ENCODE measurements at regions of chr4 and their contacts with region 1.

Region 1: GRCh38 chr4:2262143-2262943 is 434 bp upstream of the MXD4 start:
- DNase-seq: peak; percentile 92 to 99 (median 97)
- ATAC-seq: peak; percentile 89
- H3K4me3 ChIP-seq: peak overlapping the region; percentile 64
- H3K4me3 Mint-ChIP-seq: peak overlapping the region; percentile 96
- H3K27ac ChIP-seq: peak overlapping the region; percentile 84 to 93
- H3K27ac Mint-ChIP-seq: peak overlapping the region; percentile 95
- H3K4me1 ChIP-seq: peaks cover 51% of the 10 kb centered on the region
- H3K4me1 Mint-ChIP-seq: no peaks in the 10 kb centered on the region
- H3K27me3 ChIP-seq: no peaks in the 10 kb centered on the region
- H3K27me3 Mint-ChIP-seq: no peaks in the 10 kb centered on the region
- CTCF ChIP-seq: no peak

Region 2: DNA sequence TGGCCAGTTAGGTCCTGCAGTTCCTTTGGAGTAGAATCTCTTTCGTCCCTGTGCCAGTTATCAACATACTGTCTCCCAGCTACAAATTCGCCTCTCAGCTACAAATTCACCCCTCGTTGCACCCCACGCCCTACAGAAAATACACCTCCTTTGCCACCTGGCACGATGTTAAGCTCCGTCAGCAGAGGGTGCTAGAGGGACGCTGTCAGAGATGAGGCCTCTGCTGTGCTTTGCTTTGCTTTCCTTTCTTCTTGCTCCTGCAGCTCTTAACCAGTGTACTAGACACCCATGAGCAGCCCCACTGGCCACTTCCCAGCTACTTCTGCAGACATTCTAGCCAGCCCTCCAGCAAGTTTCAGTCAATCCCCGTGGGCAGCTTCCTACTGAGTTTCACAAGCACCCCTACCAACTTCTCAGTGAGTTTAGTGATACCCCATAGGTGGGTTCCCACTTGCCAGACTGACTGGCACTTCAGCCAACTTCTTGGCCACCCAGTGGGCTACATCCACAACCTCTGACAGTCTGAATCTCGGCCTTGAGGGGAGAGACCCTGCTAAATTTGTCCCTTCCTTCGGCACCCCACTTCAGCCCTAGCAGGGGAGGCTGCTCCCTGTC is 42.2 kb before region 1 on chr4:
- CTCF ChIA-PET with region 1: no interaction called
- POLR2A ChIA-PET with region 1: interaction called, 5 read pairs
- intact Hi-C with region 1: loop called in 1 of 2 experiments (anchors 1 kb)
- DNase-seq: peak; percentile 71 to 88 (median 78)
- ATAC-seq: peak; percentile 98
- H3K4me3 ChIP-seq: no peak overlapping the region
- H3K4me3 Mint-ChIP-seq: no peak overlapping the region
- H3K27ac ChIP-seq: no peak overlapping the region
- H3K27ac Mint-ChIP-seq: no peak overlapping the region
- H3K4me1 ChIP-seq: peaks cover 6% of the 10 kb centered on the region
- H3K4me1 Mint-ChIP-seq: peaks cover 7% of the 10 kb centered on the region
- H3K27me3 ChIP-seq: no peaks in the 10 kb centered on the region
- H3K27me3 Mint-ChIP-seq: no peaks in the 10 kb centered on the region
- CTCF ChIP-seq: peak; percentile 88

Region 3: DNA sequence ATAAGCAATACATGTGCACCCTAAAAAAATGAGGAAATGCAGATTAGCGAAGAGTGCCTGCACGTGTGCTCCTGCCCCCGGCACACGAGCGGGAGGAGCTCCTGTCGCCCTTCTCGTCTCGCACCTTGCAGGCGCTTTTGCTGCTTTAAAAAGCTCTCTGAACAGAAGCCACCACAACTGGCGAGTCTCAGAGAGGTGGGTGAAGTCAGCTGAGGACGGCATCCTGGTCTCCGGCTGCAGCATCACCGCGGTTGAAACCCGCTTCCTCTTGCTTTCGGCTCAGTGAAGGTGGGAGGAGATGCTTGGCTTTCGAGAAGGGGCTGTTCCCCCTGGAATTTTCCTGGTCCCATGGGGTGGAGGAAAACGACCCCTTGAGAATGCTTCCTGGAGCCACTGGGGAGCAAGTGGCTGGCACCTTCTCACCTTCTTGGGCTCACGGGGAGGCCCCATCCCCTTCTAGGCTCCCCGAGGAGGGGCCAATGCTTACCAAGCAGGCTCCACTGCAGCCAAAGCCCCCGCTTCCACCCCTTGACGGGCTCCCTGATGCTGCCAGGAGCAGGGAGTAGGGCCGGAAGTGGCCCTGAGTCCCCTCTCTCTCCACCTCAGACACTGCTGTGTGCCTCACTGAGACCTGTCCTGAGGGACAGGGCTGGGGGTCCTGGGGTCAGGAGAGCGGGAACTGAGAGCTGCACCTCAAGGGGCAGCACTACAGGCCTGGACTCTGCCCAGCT is 28.8 kb after region 1 on chr4:
- CTCF ChIA-PET with region 1: no interaction called
- POLR2A ChIA-PET with region 1: interaction called, 51 read pairs
- intact Hi-C with region 1: loop called in 1 of 2 experiments (anchors 1 kb)
- DNase-seq: peak; percentile 68 to 95 (median 77)
- ATAC-seq: peak; percentile 94
- H3K4me3 ChIP-seq: peak overlapping the region; percentile 19
- H3K4me3 Mint-ChIP-seq: peak overlapping the region; percentile 90
- H3K27ac ChIP-seq: peak overlapping the region; percentile 85 to 91
- H3K27ac Mint-ChIP-seq: peak overlapping the region; percentile 100
- H3K4me1 ChIP-seq: peaks cover 60% of the 10 kb centered on the region
- H3K4me1 Mint-ChIP-seq: peaks cover 56% of the 10 kb centered on the region
- H3K27me3 ChIP-seq: no peaks in the 10 kb centered on the region
- H3K27me3 Mint-ChIP-seq: no peaks in the 10 kb centered on the region
- CTCF ChIP-seq: no peak

Region 4: DNA sequence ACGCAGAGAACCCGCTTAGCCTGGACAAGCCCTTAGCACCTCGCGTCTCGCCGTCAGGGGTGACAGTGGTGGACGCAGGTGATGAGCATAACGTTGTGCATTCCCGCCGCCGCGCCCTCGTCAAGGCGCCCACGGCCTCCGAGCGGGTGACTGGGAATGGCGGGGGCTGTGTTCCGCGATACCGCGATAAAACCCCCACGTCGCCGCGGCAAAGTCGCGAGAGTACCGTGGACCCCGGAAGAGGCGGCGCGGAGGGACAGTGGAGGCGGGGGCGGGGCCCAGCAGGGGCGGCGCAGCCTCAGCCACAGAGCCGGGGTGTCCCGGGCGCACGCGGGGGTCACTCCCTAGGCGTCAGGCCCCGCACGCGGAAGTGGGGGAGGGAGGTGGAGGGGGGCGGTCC is 102.3 kb after region 1 on chr4:
- CTCF ChIA-PET with region 1: interaction called, 3 read pairs
- POLR2A ChIA-PET with region 1: interaction called, 5 read pairs
- intact Hi-C with region 1: loop called in 1 of 2 experiments (anchors 5 kb)
- DNase-seq: peak; percentile 41 to 82 (median 57)
- ATAC-seq: peak; percentile 85
- H3K4me3 ChIP-seq: peak overlapping the region; percentile 73
- H3K4me3 Mint-ChIP-seq: peak overlapping the region; percentile 86
- H3K27ac ChIP-seq: peak overlapping the region; percentile 33 to 44
- H3K27ac Mint-ChIP-seq: peak overlapping the region; percentile 89
- H3K4me1 ChIP-seq: peaks cover 35% of the 10 kb centered on the region
- H3K4me1 Mint-ChIP-seq: peaks cover 21% of the 10 kb centered on the region
- H3K27me3 ChIP-seq: no peaks in the 10 kb centered on the region
- H3K27me3 Mint-ChIP-seq: no peaks in the 10 kb centered on the region
- CTCF ChIP-seq: no peak

Region 5: DNA sequence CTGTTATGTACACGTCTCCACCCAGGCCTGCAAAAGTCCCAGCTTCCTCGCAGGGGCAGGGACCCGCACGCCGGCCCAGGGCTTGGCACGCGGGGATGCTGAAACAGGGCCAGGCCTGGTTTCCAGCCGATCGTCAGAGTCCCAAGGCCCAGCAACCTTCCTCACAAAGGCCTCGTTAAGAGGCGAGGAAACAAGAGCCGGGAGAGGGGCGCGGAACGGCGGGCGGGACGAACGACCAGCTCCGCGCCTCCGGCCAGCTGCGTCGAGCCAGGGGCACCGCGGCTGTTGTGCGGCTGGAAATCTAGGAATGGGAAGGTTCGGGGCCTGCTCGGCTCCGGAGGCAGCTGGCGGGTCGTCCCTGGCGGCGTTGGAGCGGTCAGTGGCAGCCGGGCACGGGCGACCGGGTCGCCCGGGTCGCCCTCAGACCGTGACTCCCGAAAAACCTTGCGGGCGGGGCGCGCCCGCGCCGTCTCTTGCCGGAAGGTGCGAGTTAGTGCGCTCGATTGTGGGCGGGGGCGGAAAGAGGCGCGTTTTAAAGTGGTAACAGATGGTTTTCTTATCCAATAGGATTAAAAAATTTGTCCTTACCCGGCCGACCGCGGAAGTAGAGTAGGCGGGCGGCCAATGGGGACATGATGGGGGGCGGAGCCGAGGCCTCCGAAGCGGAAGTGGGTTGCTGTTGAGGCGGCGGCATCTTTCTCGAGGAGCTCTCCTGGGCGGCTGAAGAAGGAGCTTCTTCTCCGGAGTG is 206.3 kb after region 1 on chr4 and contains the start of gene RNF4:
- CTCF ChIA-PET with region 1: no interaction called
- POLR2A ChIA-PET with region 1: interaction called, 46 read pairs
- intact Hi-C with region 1: no loop called
- DNase-seq: peak; percentile 89 to 98 (median 94)
- ATAC-seq: peak; percentile 84
- H3K4me3 ChIP-seq: peak within 1 kb of the TSS; percentile 98
- H3K4me3 Mint-ChIP-seq: peak within 1 kb of the TSS; percentile 94
- H3K27ac ChIP-seq: peak within 1 kb of the TSS; percentile 96 to 97
- H3K27ac Mint-ChIP-seq: peak within 1 kb of the TSS; percentile 94
- H3K4me1 ChIP-seq: peaks cover 48% of the 10 kb centered on the region
- H3K4me1 Mint-ChIP-seq: peaks cover 48% of the 10 kb centered on the region
- H3K27me3 ChIP-seq: no peaks in the 10 kb centered on the region
- H3K27me3 Mint-ChIP-seq: no peaks in the 10 kb centered on the region
- CTCF ChIP-seq: no peak
- total RNA-seq, gene RNF4: 106 to 109 TPM

Measured in CD4-positive, alpha-beta T cell (primary cell).